Activated CD4-positive, alpha-beta T cell treated with anti-CD3 and anti-CD28 coated beads, Interleukin-2, amount 10 ng/mL, durations not matched to agents 24 days and 14 days (primary cell): ENCODE measurements at regions of chr9 and their contacts with region 1.

Region 1: DNA sequence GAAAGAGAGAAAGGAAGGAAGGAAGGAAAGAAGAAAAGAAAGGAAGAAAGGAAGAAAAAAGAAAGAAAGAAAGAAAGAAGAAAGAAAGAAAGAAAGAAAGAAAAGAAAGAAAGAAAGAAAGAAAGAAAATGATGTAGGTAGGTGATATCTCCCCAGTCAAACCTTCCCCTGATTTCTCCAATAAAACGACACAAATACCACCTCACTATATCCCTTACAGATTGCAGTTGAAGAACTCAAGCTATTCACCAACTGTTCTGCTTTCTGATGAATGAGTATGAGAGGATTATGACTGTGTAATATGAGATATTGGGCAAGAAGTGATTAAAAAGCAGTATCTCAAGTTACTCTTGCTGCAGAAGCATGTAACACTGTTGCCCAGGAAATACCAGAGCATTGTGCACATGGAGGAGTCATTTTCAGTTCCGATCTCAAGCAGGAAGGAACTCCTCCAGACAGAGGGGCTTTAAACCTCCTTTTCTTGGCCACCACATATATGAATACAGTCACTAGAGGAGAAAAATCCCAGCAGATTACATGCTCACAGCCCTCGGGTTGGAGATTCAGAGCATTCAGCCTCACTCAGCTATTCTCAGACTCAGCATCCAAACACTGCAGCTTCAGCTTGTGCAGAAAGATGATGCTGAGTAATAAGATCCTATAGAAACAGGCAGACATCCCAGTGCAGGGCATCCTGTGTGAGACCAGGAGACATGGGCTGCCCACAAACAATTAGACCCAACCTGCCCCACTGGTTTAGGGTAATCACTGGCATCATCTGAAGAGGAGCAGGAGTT is 61.4 kb downstream of the UGCG start:
- DNase-seq: peak; percentile 72
- H3K4me3 Mint-ChIP-seq: peak overlapping the region; percentile 60
- H3K27ac Mint-ChIP-seq: no peak overlapping the region
- H3K4me1 Mint-ChIP-seq: peaks cover 14% of the 10 kb centered on the region
- H3K27me3 Mint-ChIP-seq: peaks cover 32% of the 10 kb centered on the region

Region 2: DNA sequence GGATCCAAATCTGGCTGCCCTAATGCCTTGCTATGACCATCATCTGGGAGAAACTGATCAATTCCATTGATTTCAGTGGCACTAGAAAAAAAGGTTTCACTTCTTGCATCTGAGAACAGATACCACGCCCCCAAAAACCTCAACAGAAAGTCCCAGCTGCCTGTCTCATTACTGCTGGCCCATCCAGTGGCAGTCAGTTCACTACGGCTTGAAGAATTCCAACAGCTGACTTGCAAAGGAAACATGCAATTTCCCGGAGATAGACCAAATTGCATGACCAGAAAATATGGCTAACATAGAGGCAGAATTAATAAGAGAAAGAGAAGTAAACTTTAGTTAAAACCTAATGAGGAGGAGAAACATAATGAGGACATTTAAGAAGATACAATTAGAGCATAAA is 12.8 kb before region 1 on chr9:
- intact Hi-C with region 1: loop called (anchors 2 kb)
- DNase-seq: peak; percentile 75
- H3K4me3 Mint-ChIP-seq: no peak overlapping the region
- H3K27ac Mint-ChIP-seq: no peak overlapping the region
- H3K4me1 Mint-ChIP-seq: peaks cover 18% of the 10 kb centered on the region
- H3K27me3 Mint-ChIP-seq: peaks cover 6% of the 10 kb centered on the region